ENCODE measurements at regions of chr3 and their contacts with region 1.

Region 1: DNA sequence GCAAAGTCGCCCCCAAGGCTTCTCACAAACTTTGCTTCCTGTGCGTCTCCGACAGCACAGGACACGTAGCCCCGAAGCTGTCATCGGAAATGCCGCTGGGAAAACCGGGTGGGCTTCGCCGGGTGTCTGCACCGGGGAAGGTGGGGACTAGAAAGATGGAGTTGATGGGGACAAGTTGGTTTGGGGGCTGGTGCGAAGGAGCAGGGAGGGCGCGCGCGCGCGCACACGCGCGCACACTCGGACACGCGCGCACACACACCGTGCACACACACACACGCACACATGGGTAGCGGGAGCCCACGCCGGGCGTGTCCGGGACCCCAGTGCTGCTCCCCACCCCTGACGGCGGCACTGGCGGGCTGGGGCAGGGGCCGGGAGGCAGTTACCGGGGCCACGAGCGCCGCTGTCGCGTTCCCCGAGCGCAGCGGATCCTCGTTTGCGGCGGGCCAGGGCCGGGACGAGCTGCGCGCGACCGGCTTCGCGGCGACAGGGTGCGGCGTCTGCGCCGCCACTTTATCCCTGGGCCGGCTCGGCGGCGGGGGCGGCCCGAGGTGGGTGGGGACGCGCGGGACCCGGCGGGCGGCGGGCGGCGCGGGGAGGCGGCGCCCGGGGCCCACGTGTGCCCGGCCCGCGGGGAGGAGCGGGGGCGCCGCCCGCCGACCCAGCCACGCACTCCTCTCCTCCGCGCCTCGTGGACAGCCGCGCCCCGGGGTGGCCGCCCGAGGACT is 547 bp upstream of the MGLL start:
- DNase-seq: no peak
- ATAC-seq: peak; percentile 53
- H3K4me3 ChIP-seq: peak overlapping the region; percentile 95
- H3K27ac ChIP-seq: peak overlapping the region; percentile 76
- H3K4me1 ChIP-seq: peaks cover 7% of the 10 kb centered on the region
- H3K27me3 ChIP-seq: no peaks in the 10 kb centered on the region
- CTCF ChIP-seq: peak in 1 of 3 experiments; percentile 70; a peak in 3 of 6 replicates
- EP300 ChIP-seq: no peak
- POLR2A ChIP-seq: peak; percentile 68
- RAD21 ChIP-seq: peak; percentile 52

Region 2: DNA sequence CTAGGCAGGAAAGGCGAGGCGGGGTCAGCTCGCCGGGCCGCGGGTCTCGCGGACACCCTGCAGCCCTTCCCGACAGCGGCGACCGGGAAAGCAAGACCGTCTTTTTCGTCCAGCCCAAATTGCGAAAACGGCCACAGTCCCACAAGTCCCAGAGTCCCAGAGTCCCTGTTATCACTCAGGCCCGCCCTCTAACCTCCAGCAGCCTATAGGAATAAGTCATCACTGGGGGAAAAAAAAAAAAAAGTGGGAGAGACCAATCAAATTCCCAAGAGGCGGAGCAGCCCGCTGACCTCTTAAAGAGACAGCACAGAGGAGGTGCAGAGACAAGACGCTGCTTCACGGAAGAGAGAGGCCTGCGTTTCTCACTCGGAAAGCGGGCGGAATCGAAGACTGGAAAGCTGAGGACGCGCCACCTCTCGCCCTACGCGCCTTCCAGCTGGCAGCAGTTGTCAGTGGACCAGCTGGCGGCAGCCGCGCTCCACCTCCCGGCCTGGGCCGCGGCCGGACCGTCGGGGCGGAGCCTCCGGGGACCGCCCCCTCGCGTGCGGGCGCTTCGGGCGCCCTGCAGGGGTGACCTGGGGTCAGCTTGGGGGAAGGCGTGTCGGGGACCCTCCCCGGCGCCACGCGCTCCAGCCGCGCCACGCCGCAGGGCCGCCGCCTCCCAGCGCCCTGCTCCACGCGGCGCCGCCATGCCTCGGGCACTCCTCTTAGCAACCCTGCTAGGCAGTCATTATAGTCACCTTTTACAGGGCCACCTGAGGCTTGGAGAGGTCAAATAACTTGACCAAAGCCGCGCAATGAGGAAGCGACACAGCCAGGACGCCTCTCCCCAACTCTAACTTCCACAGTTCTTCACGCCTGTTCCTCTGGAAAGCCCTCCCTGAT is 232.0 kb before region 1 on chr3 and contains the start of gene TPRA1:
- CTCF ChIA-PET with region 1: interaction called, 3 read pairs
- POLR2A ChIA-PET with region 1: interaction called, 3 read pairs
- RAD21 ChIA-PET with region 1: no interaction called
- SMC1A ChIA-PET with region 1: no interaction called
- in situ Hi-C with region 1: no loop called
- intact Hi-C with region 1: loop called (anchors 5 kb)
- DNase-seq: peak; percentile 90
- ATAC-seq: peak; percentile 84
- H3K4me3 ChIP-seq: peak within 1 kb of the TSS; percentile 99
- H3K27ac ChIP-seq: peak within 1 kb of the TSS; percentile 94
- H3K4me1 ChIP-seq: peaks cover 22% of the 10 kb centered on the region
- H3K27me3 ChIP-seq: no peaks in the 10 kb centered on the region
- CTCF ChIP-seq: peak; percentile 26 to 72 (median 42); a peak in 5 of 6 replicates
- EP300 ChIP-seq: no peak
- POLR2A ChIP-seq: peak; percentile 58; the same call in 1 of the 2 replicates
- RAD21 ChIP-seq: peak; percentile 33
- polyA plus RNA-seq, gene TPRA1: 1.8 to 3.6 TPM

Region 3: DNA sequence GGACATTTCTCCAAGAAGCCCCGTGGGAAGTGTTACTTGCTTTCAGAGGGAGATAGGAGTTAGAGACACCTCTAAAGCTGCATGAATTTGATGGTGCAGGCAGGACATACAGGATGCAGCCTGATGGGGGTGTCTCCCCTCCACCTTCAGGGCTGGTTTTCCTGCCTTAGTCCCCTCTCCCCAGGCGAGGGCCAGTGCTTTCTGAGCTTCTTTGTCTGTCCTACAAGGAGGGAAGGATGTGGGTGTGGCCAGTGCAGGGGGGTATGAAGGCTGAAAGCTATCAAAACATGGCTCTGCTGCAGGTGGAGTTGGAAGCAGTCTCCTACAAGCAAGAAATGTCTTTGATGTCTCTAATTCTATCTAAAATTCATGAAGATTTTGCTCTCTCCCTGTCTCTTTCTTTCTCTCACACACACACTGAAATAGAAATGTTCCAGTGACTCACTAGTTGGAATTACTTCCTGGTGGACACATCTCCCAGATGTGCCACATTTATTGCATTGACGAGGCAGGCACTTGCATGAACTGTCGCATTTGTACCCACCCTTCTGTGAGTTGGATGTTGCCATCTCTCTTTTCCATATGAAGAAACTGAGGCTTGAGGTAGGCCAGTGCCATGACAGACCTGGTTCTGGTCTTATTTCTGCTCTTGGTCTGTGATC is 207.8 kb before region 1 on chr3:
- CTCF ChIA-PET with region 1: no interaction called
- POLR2A ChIA-PET with region 1: no interaction called
- RAD21 ChIA-PET with region 1: no interaction called
- SMC1A ChIA-PET with region 1: no interaction called
- in situ Hi-C with region 1: no loop called
- intact Hi-C with region 1: no loop called
- DNase-seq: no peak
- ATAC-seq: no peak
- H3K4me3 ChIP-seq: no peak overlapping the region
- H3K27ac ChIP-seq: no peak overlapping the region
- H3K4me1 ChIP-seq: no peaks in the 10 kb centered on the region
- H3K27me3 ChIP-seq: no peaks in the 10 kb centered on the region
- CTCF ChIP-seq: no peak
- EP300 ChIP-seq: no peak
- POLR2A ChIP-seq: no peak
- RAD21 ChIP-seq: no peak

Region 4: DNA sequence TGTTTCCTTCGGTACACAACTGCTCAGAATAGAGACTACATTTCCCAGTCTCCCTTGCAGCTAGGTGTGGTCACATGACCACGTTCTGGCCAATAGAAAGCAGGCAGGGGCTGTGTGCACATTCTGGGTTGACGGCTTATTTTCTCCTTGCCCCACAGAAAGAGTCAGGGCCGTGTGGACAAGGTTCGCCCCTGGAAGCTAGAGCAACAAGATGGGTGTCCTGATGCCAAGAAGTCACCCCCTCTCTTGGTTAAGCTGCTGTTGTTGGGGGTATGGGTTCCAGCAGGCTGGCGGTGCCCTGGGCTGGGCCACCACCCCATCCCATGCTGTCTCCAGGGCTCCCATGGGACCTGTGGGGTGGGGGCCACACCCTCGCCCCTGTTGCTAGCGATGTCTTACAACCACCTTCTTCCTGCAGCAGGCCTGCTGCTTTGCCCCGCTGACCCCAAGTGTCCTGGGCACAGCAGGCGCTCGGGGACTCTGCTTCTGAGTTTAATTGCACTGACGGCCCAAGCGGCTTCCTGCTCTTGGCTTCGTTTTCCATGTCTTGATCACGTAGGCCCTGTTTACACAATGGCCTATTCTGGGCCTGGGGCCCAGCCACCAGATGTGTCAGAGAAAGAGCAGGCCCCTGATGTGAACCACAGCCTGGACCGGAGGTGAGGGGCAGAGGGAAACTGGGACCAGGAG is 125.2 kb before region 1 on chr3:
- CTCF ChIA-PET with region 1: interaction called, 5 read pairs
- POLR2A ChIA-PET with region 1: interaction called, 4 read pairs
- RAD21 ChIA-PET with region 1: interaction called, 12 read pairs
- SMC1A ChIA-PET with region 1: interaction called, 10 read pairs
- in situ Hi-C with region 1: no loop called
- intact Hi-C with region 1: no loop called
- DNase-seq: peak; percentile 48
- ATAC-seq: peak; percentile 94
- H3K4me3 ChIP-seq: no peak overlapping the region
- H3K27ac ChIP-seq: no peak overlapping the region; the same call in 1 of the 2 replicates
- H3K4me1 ChIP-seq: peaks cover 14% of the 10 kb centered on the region
- H3K27me3 ChIP-seq: no peaks in the 10 kb centered on the region
- CTCF ChIP-seq: no peak
- EP300 ChIP-seq: no peak
- POLR2A ChIP-seq: peak; percentile 46
- RAD21 ChIP-seq: no peak

Region 5: GRCh38 chr3:127762077-127762786 is 60.6 kb before region 1 on chr3:
- CTCF ChIA-PET with region 1: interaction called, 19 read pairs
- POLR2A ChIA-PET with region 1: interaction called, 42 read pairs
- RAD21 ChIA-PET with region 1: interaction called, 52 read pairs
- SMC1A ChIA-PET with region 1: interaction called, 44 read pairs
- in situ Hi-C with region 1: no loop called
- intact Hi-C with region 1: no loop called
- DNase-seq: peak; percentile 56
- ATAC-seq: peak; percentile 75
- H3K4me3 ChIP-seq: peak overlapping the region; percentile 62
- H3K27ac ChIP-seq: peak overlapping the region; percentile 96
- H3K4me1 ChIP-seq: peaks cover 64% of the 10 kb centered on the region
- H3K27me3 ChIP-seq: no peaks in the 10 kb centered on the region
- CTCF ChIP-seq: no peak
- EP300 ChIP-seq: peak; percentile 20 to 26; a peak in 1 of 4 replicates
- POLR2A ChIP-seq: peak; percentile 69
- RAD21 ChIP-seq: peak; percentile 13; the same call in 1 of the 2 replicates

Region 6: DNA sequence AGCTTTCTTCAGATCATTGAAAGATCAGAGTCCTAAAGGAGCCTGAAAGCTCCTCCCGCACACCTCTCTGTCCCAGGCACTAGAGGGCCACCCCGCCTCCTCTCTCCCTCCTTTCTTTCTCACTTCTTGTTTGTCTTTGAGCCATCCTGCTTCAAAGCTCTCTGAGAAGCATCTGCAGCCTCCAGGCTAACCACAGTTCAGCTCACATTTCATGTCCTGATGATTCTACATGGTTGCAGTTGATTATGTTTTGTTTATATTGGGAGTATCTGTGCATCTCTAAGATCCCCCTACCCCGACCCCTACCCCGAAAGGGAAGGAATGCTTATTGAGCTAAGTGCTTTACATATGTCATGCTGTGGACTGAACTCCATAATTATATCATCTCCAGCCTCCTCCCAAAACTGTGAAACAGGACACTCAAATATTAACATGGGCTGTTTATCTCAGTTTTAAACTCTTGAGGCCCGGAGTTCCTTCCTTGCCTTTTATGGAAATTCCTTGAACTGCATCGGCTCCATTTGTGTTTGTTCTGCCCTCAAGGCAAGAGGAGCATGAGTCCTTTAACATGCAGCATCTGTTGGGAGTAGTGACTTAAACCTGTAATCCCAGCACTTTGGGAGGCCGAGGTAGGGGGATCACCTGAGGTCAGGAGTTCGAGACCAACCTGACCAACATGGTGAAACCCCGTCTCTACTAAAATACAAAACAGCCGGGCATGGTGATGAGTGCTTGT is 31.5 kb before region 1 on chr3:
- CTCF ChIA-PET with region 1: interaction called, 18 read pairs
- POLR2A ChIA-PET with region 1: interaction called, 12 read pairs
- RAD21 ChIA-PET with region 1: interaction called, 33 read pairs
- SMC1A ChIA-PET with region 1: interaction called, 14 read pairs
- in situ Hi-C with region 1: no loop called
- intact Hi-C with region 1: no loop called
- DNase-seq: peak; percentile 41
- ATAC-seq: peak; percentile 99
- H3K4me3 ChIP-seq: no peak overlapping the region
- H3K27ac ChIP-seq: no peak overlapping the region
- H3K4me1 ChIP-seq: peaks cover 13% of the 10 kb centered on the region
- H3K27me3 ChIP-seq: no peaks in the 10 kb centered on the region
- CTCF ChIP-seq: peak; percentile 51 to 58 (median 52); a peak in 5 of 6 replicates
- EP300 ChIP-seq: no peak
- POLR2A ChIP-seq: no peak
- RAD21 ChIP-seq: peak; percentile 68

Region 7: DNA sequence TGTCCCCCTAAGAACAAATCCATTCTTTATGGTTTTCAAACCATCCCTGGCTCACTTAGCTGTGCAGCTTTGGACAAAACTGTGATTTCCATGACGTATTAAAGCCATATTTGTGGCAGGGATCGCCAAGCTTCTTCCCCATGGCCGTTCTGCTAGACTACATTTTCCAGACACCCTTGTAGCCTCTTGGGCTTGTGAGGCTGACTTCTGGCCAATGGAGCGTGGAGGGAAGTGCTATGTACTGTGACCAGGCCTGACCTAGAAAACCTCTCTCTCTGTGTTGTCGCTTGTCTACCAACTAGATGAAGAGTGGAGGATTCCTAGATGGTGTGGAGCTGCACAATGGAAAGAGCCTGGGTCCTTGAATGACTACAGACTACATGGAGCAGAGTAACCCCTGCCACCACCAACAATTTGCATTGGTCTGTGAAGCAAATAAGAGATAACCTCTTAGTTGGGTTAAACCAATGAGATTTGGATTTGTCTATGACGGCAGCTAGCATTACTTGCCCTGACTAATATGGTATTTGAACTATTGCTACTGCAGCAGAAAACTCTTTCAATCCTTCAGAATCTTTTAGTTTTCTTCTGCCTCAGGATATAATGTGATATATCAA is 21.6 kb after region 1 on chr3:
- CTCF ChIA-PET with region 1: interaction called, 4 read pairs
- POLR2A ChIA-PET with region 1: interaction called, 3 read pairs
- RAD21 ChIA-PET with region 1: interaction called, 3 read pairs
- SMC1A ChIA-PET with region 1: interaction called, 18 read pairs
- in situ Hi-C with region 1: no loop called
- intact Hi-C with region 1: no loop called
- DNase-seq: peak; percentile 51
- ATAC-seq: peak; percentile 92
- H3K4me3 ChIP-seq: no peak overlapping the region
- H3K27ac ChIP-seq: no peak overlapping the region
- H3K4me1 ChIP-seq: peaks cover 31% of the 10 kb centered on the region
- H3K27me3 ChIP-seq: no peaks in the 10 kb centered on the region
- CTCF ChIP-seq: no peak
- EP300 ChIP-seq: no peak
- POLR2A ChIP-seq: no peak
- RAD21 ChIP-seq: no peak